A673 (cell line): ENCODE measurements at regions of chr3 and their contacts with region 1.

Region 1: DNA sequence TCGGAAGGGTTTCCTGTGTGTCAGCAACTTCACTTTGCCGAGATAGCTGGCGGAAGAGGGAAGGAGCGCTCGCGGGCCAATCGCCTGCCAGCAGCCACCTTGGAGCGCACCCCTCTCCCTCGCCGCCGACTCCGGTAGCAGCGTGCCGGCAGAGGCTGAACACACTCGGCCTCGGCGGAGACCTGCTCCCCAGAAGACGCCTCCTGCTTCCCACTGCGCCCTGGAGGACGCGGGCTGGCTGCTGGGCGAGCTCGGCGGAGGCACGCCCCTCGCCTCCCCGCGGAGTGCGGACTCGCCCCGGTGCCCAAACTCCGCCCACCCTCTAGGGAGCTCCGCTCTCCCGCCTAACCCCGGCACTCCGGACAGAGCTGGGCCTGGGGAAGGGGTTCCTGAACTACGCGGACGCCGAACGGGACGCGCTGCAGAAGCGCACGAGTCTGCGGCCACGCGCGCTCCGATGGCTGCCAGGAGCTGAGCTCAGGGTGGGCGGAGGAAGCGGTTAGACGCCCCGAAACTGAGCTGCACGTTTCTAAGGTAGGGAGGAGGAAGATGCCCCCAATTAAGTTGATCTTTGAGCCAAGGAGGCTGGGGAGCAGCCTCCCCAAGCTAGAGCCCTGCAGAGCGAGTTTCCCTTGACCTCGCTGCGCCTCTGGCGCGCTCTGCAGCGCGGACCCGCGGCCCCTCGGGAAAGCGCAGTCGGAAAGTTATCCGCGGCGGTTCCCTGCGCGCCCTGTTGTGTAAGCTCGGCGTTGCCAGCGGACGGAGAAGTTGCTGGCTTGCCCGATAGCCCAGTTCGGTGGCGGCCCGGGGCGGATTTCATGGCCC is at the start of gene P2RY1:
- DNase-seq: peak; percentile 92
- H3K4me3 ChIP-seq: peak within 1 kb of the TSS; percentile 75
- H3K27ac ChIP-seq: peak within 1 kb of the TSS; percentile 75
- H3K4me1 ChIP-seq: peaks cover 15% of the 10 kb centered on the region
- H3K27me3 ChIP-seq: no peaks in the 10 kb centered on the region
- CTCF ChIP-seq: peak; percentile 58
- total RNA-seq, gene P2RY1: 14.0 and 17.0 TPM in 2 replicates

Region 2: GRCh38 chr3:152222327-152222726 is 612.7 kb before region 1 on chr3:
- CTCF ChIA-PET with region 1: no interaction called
- POLR2A ChIA-PET with region 1: no interaction called
- intact Hi-C with region 1: no loop called
- DNase-seq: no peak
- H3K4me3 ChIP-seq: no peak overlapping the region
- H3K27ac ChIP-seq: no peak overlapping the region
- H3K4me1 ChIP-seq: no peaks in the 10 kb centered on the region
- H3K27me3 ChIP-seq: no peaks in the 10 kb centered on the region
- CTCF ChIP-seq: no peak

Region 3: DNA sequence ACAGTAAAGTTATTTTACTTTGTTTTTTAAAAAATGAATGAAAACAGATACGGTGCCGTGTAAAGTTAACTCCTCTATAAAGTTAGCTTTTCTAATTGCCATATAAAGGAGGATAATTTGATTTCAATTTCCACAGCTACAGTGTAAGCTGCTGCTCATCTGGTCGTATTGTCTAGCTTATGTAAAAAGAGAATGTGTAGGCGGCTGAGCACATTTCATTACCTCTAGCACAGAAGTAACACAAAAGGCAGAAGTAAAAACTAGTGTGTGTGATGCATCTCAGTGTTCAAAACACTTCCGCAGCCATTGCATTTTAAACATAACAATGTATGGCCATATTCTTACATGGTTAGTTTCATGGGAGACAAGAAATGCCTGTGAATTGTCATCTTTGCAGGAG is 105.1 kb before region 1 on chr3:
- CTCF ChIA-PET with region 1: no interaction called
- POLR2A ChIA-PET with region 1: no interaction called
- intact Hi-C with region 1: loop called (anchors 5 kb)
- DNase-seq: peak; percentile 68
- H3K4me3 ChIP-seq: no peak overlapping the region
- H3K27ac ChIP-seq: peak overlapping the region; percentile 83
- H3K4me1 ChIP-seq: peaks cover 40% of the 10 kb centered on the region
- H3K27me3 ChIP-seq: no peaks in the 10 kb centered on the region
- CTCF ChIP-seq: no peak